Mammary epithelial cell (primary cell): ENCODE measurements at regions of chr6 and their contacts with region 1.

Region 1: GRCh38 chr6:50816115-50816675 is 2.5 kb upstream of the TFAP2B start:
- DNase-seq: peak; percentile 61
- H3K4me3 ChIP-seq: peak overlapping the region; percentile 52 to 97 (median 89)
- H3K27ac ChIP-seq: no peak overlapping the region
- H3K4me1 ChIP-seq: peaks cover 10% of the 10 kb centered on the region
- H3K27me3 ChIP-seq: peaks cover 44% of the 10 kb centered on the region
- CTCF ChIP-seq: peak; percentile 78 to 81

Region 2: DNA sequence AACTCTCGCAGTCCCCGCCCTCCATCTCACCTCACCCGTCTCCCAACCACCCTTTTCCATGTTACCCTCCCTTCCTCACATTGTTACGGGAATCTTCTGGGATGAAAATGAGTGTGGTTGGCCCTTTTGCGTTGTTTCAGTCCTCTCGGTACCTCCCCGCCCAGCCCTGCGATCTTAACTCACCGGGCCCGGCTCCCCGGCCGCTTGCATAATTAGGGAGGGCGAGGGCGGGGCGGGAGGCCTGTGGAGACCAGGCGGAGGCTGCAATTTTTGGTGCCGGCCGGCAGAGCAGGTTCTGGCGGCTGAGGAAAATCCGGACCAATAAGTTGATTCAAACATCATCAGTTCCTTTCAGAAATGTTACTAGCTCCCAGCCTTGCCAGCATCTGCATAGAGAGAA is 27.6 kb after region 1 on chr6:
- CTCF ChIA-PET with region 1: no interaction called
- dilution Hi-C with region 1: no loop called
- in situ Hi-C with region 1: no loop called
- intact Hi-C with region 1: loop called (anchors 2 kb)
- DNase-seq: no peak
- H3K4me3 ChIP-seq: peak overlapping the region in 2 of 3 experiments; percentile 9 to 23
- H3K27ac ChIP-seq: no peak overlapping the region
- H3K4me1 ChIP-seq: no peaks in the 10 kb centered on the region
- H3K27me3 ChIP-seq: peaks cover 43% of the 10 kb centered on the region
- CTCF ChIP-seq: peak in 1 of 2 donors; percentile 21

Region 3: DNA sequence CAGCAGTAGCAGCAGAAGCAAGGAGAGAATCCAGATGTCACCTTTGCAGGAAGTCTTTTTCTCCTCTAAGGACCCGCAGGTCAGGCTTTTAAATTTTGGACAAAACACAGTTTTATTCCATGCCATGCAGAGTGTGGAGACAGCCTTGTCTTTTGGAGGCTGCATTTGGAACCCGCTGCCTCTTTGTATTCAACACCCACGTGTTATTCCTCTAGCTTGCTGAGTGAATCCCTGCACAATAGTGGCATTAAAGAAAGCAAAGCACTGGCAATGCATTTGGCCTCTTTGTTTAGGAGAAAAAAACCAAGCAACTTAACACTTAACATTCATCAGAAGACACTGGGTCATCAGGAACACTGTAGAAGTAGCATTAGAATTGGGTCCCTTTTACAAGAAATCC is 46.0 kb after region 1 on chr6:
- CTCF ChIA-PET with region 1: no interaction called
- dilution Hi-C with region 1: no loop called
- in situ Hi-C with region 1: no loop called
- intact Hi-C with region 1: no loop called
- DNase-seq: no peak
- H3K4me3 ChIP-seq: no peak overlapping the region
- H3K27ac ChIP-seq: no peak overlapping the region
- H3K4me1 ChIP-seq: no peaks in the 10 kb centered on the region
- H3K27me3 ChIP-seq: peaks cover 2% of the 10 kb centered on the region
- CTCF ChIP-seq: no peak

Region 4: GRCh38 chr6:51350308-51350904 is 534.2 kb after region 1 on chr6:
- CTCF ChIA-PET with region 1: interaction called, 5 read pairs
- dilution Hi-C with region 1: no loop called
- in situ Hi-C with region 1: loop called in 1 of 2 experiments (anchors 10 kb)
- intact Hi-C with region 1: loop called (anchors 1 kb)
- DNase-seq: no peak
- H3K4me3 ChIP-seq: no peak overlapping the region
- H3K27ac ChIP-seq: no peak overlapping the region
- H3K4me1 ChIP-seq: no peaks in the 10 kb centered on the region
- H3K27me3 ChIP-seq: peaks cover 1% of the 10 kb centered on the region
- CTCF ChIP-seq: peak; percentile 57 to 61

Region 5: GRCh38 chr6:51531623-51532022 is 715.4 kb after region 1 on chr6:
- CTCF ChIA-PET with region 1: no interaction called
- dilution Hi-C with region 1: no loop called
- in situ Hi-C with region 1: loop called (anchors 10 kb)
- intact Hi-C with region 1: no loop called
- DNase-seq: no peak
- H3K4me3 ChIP-seq: no peak overlapping the region
- H3K27ac ChIP-seq: no peak overlapping the region
- H3K4me1 ChIP-seq: no peaks in the 10 kb centered on the region
- H3K27me3 ChIP-seq: no peaks in the 10 kb centered on the region
- CTCF ChIP-seq: no peak

Region 6: DNA sequence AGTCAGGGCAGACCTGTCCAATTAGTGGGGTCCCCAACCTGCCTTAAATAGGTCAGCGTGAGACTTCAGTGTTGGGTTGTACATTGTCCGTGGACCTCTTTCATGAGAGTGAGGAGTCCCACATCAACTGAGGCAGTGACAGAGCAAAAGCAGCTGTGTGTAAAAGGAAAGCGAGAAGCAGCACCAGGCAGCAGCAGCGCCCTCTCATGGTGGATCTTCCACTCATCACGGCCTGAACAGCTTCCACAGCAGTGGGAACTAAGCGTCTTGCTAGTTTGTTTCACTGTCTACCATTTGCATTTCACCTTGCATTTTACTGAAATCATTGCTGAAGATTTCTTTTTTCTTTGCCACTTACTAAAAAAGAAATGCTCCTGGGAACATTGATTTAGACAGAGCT is 937.4 kb after region 1 on chr6:
- CTCF ChIA-PET with region 1: no interaction called
- dilution Hi-C with region 1: no loop called
- in situ Hi-C with region 1: loop called in 1 of 2 experiments (anchors 25 kb)
- intact Hi-C with region 1: loop called (anchors 5 kb)
- DNase-seq: peak; percentile 10
- H3K4me3 ChIP-seq: no peak overlapping the region
- H3K27ac ChIP-seq: no peak overlapping the region
- H3K4me1 ChIP-seq: no peaks in the 10 kb centered on the region
- H3K27me3 ChIP-seq: peaks cover 2% of the 10 kb centered on the region
- CTCF ChIP-seq: peak; percentile 68 to 81

Region 7: GRCh38 chr6:51959744-51960383 is 1143.7 kb after region 1 on chr6:
- CTCF ChIA-PET with region 1: no interaction called
- dilution Hi-C with region 1: no loop called
- in situ Hi-C with region 1: no loop called
- intact Hi-C with region 1: loop called (anchors 2 kb)
- DNase-seq: peak; percentile 55
- H3K4me3 ChIP-seq: no peak overlapping the region
- H3K27ac ChIP-seq: no peak overlapping the region
- H3K4me1 ChIP-seq: no peaks in the 10 kb centered on the region
- H3K27me3 ChIP-seq: no peaks in the 10 kb centered on the region
- CTCF ChIP-seq: peak; percentile 87 to 94